ENCODE measurements at regions of chr1 and their contacts with region 1.

Region 1: GRCh38 chr1:75243124-75243523 is 108.9 kb downstream of the LHX8 start:
- DNase-seq: no peak
- H3K4me3 ChIP-seq: no peak overlapping the region
- CTCF ChIP-seq: no peak
- POLR2A ChIP-seq: no peak

Region 2: DNA sequence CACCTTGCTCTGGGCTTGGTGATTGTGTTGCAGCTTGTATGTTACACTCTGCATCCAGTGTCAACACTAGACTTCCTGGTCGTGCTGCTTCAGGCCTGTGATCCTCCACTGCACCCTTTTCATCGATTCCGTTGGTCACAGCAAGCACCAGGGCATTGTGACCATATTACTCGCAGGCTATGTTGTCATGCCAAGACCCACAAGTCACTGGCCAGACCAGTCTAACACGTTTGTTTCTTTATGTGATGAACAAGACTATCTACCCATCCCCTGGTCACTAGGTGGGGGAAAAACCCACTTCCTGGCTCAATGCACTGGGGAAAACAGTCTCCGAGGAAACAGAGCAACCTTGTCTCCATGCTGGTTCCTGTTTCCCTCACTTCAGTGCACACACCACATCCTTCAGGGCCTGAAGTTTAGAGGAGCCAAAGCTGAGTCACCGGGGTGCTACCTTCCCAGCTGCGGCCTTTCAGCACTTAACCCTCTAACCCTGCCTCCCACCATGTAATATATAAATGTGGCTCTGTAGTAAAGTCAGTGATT is 590.5 kb before region 1 on chr1:
- intact Hi-C with region 1: loop called (anchors 5 kb)
- DNase-seq: no peak
- H3K4me3 ChIP-seq: no peak overlapping the region
- CTCF ChIP-seq: no peak
- POLR2A ChIP-seq: no peak

Region 3: DNA sequence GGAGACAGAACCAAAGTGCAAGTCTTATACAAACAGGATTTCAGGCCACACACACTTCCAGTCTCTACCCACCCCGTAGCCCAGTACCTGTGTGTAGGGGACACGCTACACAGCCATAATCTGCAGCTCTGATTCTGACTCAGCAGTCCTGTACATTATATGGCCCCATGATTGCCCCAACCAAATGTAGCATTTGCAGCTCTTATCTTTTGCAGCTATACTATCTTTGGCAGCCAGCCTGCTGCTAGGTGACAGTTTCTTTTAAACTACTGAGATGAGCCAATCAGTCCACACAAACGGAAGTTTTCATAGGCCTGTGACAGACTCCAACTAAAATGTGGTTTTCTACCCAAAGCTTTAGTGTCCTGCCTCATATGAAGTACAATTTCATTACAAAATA is 1364.6 kb after region 1 on chr1:
- intact Hi-C with region 1: no loop called
- DNase-seq: no peak
- H3K4me3 ChIP-seq: no peak overlapping the region
- CTCF ChIP-seq: no peak
- POLR2A ChIP-seq: no peak